CD8-positive, alpha-beta memory T cell (primary cell): ENCODE measurements at regions of chr21 and their contacts with region 1.

Region 1: DNA sequence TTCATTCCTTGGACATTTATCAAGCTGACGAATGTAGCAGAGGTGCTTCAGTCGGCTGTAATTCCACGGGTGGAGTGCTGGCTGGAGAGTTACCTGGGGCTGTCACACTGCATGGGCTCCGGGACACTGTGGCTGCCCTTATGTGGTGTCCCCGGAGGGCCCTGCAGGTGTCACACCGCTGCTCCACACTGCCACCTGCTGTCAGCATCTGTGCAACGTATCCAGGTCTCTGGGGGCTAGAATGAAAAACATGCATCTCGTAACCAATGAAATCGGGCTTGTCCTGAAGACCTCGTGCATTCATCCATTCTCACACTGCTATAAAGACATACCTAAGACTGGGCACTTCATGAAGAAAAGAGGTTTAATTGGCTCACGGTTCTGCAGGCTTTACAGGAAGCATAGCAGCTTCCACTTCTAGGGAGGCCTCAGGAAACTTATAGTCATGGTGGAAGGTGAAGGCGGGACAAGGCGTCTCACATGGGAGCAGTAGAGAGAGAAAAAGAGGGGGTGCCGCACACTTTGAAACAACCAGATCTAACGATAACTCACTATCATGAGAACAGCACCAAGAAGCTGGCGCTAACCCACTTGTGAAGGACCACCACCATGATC is 46.7 kb upstream of the PCBP3 start:
- DNase-seq: peak; percentile 69 to 86 (median 77)
- H3K4me3 ChIP-seq: no peak overlapping the region
- H3K4me3 Mint-ChIP-seq: peak overlapping the region in 1 of 7 donors; percentile 1
- H3K27ac ChIP-seq: no peak overlapping the region
- H3K27ac Mint-ChIP-seq: peak overlapping the region in 4 of 8 donors; percentile 54 to 86 (median 72)
- H3K4me1 ChIP-seq: peaks cover 19% of the 10 kb centered on the region
- H3K4me1 Mint-ChIP-seq: peaks cover 13 to 16% (median 13%) of the 10 kb centered on the region in 3 donors
- H3K27me3 ChIP-seq: no peaks in the 10 kb centered on the region
- H3K27me3 Mint-ChIP-seq: peaks cover 2 to 8% of the 10 kb centered on the region in 2 donors

Region 2: DNA sequence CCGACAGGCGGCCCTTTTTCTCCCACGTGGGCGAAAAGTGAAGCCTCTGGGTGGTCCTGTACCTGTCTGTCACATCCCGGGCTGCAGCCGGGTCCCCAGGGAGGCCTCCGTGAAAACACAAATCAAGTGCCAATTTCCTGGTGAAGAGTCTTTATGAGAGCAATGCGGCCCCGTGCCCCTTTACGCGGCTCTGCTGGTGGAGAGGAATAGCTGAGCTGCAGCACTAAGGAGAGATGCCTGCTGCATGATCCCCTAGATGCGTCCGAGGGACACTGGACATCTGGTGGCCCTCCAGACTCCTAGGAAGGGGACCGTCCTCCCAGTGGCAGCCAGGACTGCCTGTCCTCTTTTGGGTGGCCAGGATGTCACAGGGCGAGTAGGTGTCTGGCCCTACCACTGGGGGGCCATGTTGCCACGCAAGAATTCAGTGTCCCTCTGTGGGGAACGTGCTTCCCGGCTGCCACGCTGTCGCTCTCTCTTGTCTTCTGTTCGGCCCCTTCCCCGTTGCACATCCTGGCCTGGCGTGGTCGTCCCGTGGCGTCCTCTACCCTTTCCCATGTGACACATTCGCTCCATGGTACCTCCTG is 153.1 kb before region 1 on chr21:
- CTCF ChIA-PET with region 1: no interaction called
- POLR2A ChIA-PET with region 1: no interaction called
- DNase-seq: peak in 2 of 5 donors; percentile 8 to 35
- H3K4me3 ChIP-seq: no peak overlapping the region
- H3K4me3 Mint-ChIP-seq: no peak overlapping the region
- H3K27ac ChIP-seq: no peak overlapping the region
- H3K27ac Mint-ChIP-seq: no peak overlapping the region
- H3K4me1 ChIP-seq: peaks cover 6% of the 10 kb centered on the region
- H3K4me1 Mint-ChIP-seq: peaks cover 4 to 8% (median 5%) of the 10 kb centered on the region in 3 donors
- H3K27me3 ChIP-seq: no peaks in the 10 kb centered on the region
- H3K27me3 Mint-ChIP-seq: peaks cover 14 to 34% of the 10 kb centered on the region in 2 donors

Region 3: GRCh38 chr21:45478115-45478801 is 118.6 kb before region 1 on chr21:
- CTCF ChIA-PET with region 1: interaction called, 12 read pairs
- POLR2A ChIA-PET with region 1: interaction called, 3 read pairs
- DNase-seq: peak; percentile 65 to 86 (median 77)
- H3K4me3 ChIP-seq: peak overlapping the region; percentile 58
- H3K4me3 Mint-ChIP-seq: peak overlapping the region; percentile 83 to 93 (median 87)
- H3K27ac ChIP-seq: peak overlapping the region; percentile 40
- H3K27ac Mint-ChIP-seq: peak overlapping the region; percentile 76 to 99 (median 94)
- H3K4me1 ChIP-seq: peaks cover 50% of the 10 kb centered on the region
- H3K4me1 Mint-ChIP-seq: peaks cover 29 to 41% (median 40%) of the 10 kb centered on the region in 3 donors
- H3K27me3 ChIP-seq: no peaks in the 10 kb centered on the region
- H3K27me3 Mint-ChIP-seq: no peaks in the 10 kb centered on the region

Region 4: GRCh38 chr21:45618846-45619485 is 22.2 kb after region 1 on chr21:
- CTCF ChIA-PET with region 1: no interaction called
- POLR2A ChIA-PET with region 1: no interaction called
- DNase-seq: no peak
- H3K4me3 ChIP-seq: no peak overlapping the region
- H3K4me3 Mint-ChIP-seq: no peak overlapping the region
- H3K27ac ChIP-seq: no peak overlapping the region
- H3K27ac Mint-ChIP-seq: peak overlapping the region in 6 of 8 donors; percentile 4 to 79 (median 48)
- H3K4me1 ChIP-seq: peaks cover 32% of the 10 kb centered on the region
- H3K4me1 Mint-ChIP-seq: peaks cover 20 to 24% (median 22%) of the 10 kb centered on the region in 3 donors
- H3K27me3 ChIP-seq: no peaks in the 10 kb centered on the region
- H3K27me3 Mint-ChIP-seq: peaks cover 8 to 9% of the 10 kb centered on the region in 2 donors